GM12878 (cell line): ENCODE measurements at regions of chr6 and their contacts with region 1.

Region 1: GRCh38 chr6:40912158-40912946 is 126.7 kb downstream of the UNC5CL start:
- DNase-seq: peak; percentile 19
- ATAC-seq: peak; percentile 100
- H3K4me3 ChIP-seq: no peak overlapping the region
- H3K27ac ChIP-seq: no peak overlapping the region
- H3K4me1 ChIP-seq: no peaks in the 10 kb centered on the region
- H3K27me3 ChIP-seq: no peaks in the 10 kb centered on the region; a peak in 1 of 4 replicates
- CTCF ChIP-seq: peak; percentile 71 to 83 (median 73)
- EP300 ChIP-seq: peak in 1 of 2 experiments; percentile 30; a peak in 1 of 4 replicates
- POLR2A ChIP-seq: no peak
- RAD21 ChIP-seq: peak; percentile 71

Region 2: DNA sequence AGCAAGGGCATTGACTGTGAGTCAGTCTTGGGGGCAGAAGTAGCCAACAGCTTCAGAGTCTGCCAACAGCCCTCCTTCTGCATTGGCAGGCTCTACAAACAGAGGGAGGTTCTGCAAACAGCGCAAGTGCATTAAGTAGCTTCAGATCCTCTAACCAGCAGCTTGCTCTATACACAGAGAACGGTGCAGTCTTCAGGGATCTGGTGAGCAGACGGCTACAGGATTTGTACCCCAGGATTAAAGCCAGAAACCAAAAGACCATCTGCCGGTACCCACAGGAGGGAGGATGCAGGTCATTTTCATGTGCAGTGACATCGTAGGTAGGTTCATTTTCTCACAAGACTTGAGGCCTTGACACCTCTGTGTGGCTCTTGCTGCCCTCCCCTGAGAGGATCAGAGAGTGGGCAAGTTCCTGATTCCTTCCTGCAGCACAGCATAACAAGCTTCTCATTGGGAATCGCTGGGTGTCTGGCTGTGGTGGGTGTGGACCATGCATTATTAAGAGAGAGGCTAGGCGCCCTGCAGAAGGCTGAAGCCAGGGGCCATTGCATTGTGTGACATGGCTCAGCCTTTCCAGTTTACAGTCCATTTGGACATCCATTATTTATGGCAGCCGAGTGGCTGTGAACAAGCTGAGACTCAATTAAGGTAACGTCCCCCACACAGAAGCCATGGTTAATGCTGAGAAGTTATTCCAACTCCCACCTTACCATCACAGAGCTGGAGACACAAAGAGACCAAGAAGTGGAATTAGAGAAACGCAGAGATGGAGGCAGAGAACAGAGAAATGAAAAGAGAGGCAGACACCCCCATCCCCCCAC is 575.2 kb before region 1 on chr6:
- CTCF ChIA-PET with region 1: no interaction called
- POLR2A ChIA-PET with region 1: no interaction called
- RAD21 ChIA-PET with region 1: no interaction called
- SMC1A ChIA-PET with region 1: no interaction called
- in situ Hi-C with region 1: no loop called
- intact Hi-C with region 1: loop called (anchors 10 kb)
- DNase-seq: no peak
- ATAC-seq: no peak
- H3K4me3 ChIP-seq: no peak overlapping the region
- H3K27ac ChIP-seq: no peak overlapping the region
- H3K4me1 ChIP-seq: no peaks in the 10 kb centered on the region
- H3K27me3 ChIP-seq: peaks cover 0 to 7% of the 10 kb centered on the region in 2 experiments; a peak in 3 of 4 replicates
- CTCF ChIP-seq: no peak
- EP300 ChIP-seq: no peak
- POLR2A ChIP-seq: no peak
- RAD21 ChIP-seq: no peak

Region 3: GRCh38 chr6:40550202-40551101 is 361.9 kb before region 1 on chr6:
- CTCF ChIA-PET with region 1: interaction called, 13 read pairs
- POLR2A ChIA-PET with region 1: no interaction called
- RAD21 ChIA-PET with region 1: interaction called, 6 read pairs
- SMC1A ChIA-PET with region 1: interaction called, 4 read pairs
- in situ Hi-C with region 1: no loop called
- intact Hi-C with region 1: loop called (anchors 1 kb)
- DNase-seq: no peak
- ATAC-seq: peak; percentile 82
- H3K4me3 ChIP-seq: no peak overlapping the region
- H3K27ac ChIP-seq: no peak overlapping the region
- H3K4me1 ChIP-seq: no peaks in the 10 kb centered on the region
- H3K27me3 ChIP-seq: no peaks in the 10 kb centered on the region; a peak in 3 of 4 replicates
- CTCF ChIP-seq: peak; percentile 51 to 79 (median 68)
- EP300 ChIP-seq: no peak
- POLR2A ChIP-seq: no peak
- RAD21 ChIP-seq: peak; percentile 51